PC-3 (cell line): ENCODE measurements at regions of chr10 and their contacts with region 1.

Region 1: GRCh38 chr10:54854389-54854788 is 53.4 kb upstream of the PCDH15 start:
- DNase-seq: no peak
- ATAC-seq: no peak
- H3K4me3 ChIP-seq: no peak overlapping the region
- H3K27ac ChIP-seq: no peak overlapping the region
- H3K4me1 ChIP-seq: 0 out of 2 replicates have a peak, but pooled peaks cover 3% of the 10 kb centered on the region
- H3K27me3 ChIP-seq: no peaks in the 10 kb centered on the region
- CTCF ChIP-seq: no peak

Region 2: DNA sequence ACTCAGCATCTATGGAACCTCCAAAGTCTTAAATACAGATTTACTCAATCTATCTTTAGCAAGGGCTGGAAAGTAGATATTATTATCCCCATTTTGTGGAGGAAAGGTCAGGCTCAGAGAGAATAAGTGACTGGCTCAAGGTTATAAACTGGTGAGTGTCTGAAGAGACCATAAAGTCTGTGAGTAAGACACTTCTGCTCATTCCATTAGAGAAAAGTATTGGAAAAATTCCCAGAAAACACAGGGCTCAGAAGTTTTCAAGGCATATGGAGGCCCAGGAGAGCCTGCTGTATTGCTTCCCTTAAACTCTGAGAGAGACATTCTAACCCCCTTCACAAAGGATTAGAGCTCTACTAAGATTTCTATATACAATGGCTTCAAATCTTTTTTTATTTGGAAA is 188.2 kb before region 1 on chr10:
- CTCF ChIA-PET with region 1: no interaction called
- POLR2A ChIA-PET with region 1: no interaction called
- intact Hi-C with region 1: loop called (anchors 10 kb)
- DNase-seq: peak; percentile 24
- ATAC-seq: peak; percentile 86
- H3K4me3 ChIP-seq: no peak overlapping the region
- H3K27ac ChIP-seq: no peak overlapping the region
- H3K4me1 ChIP-seq: 0 out of 2 replicates have a peak, but pooled peaks cover 5% of the 10 kb centered on the region
- H3K27me3 ChIP-seq: no peaks in the 10 kb centered on the region
- CTCF ChIP-seq: no peak